ENCODE measurements at regions of chr6 and their contacts with region 1.

Region 1: DNA sequence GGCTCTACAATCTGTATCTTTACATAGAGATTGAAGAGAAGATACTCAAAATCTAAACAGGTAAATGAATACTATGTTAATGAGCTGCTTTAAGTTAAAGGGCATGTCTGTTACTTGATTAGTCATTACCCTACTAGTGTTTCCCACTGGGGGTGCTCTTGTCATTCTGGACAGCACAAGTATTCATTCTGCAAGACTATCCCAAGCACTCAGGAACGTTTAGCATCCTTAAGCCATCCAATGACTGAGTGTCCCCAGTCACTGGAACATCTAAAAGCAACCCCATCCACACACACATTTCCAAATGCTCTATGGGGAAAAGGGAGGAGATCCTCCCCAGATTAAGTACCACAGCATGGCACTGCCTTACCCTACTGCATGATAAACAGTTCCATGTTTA is 25.7 kb downstream of the EZR start:
- DNase-seq: no peak
- ATAC-seq: peak; percentile 74
- H3K4me3 ChIP-seq: 0 out of 2 replicates have a peak overlapping the region, but pooled peaks have one; percentile 36
- H3K27ac ChIP-seq: no peak overlapping the region
- H3K4me1 ChIP-seq: peaks cover 65% of the 10 kb centered on the region
- H3K27me3 ChIP-seq: no peaks in the 10 kb centered on the region
- CTCF ChIP-seq: peak; percentile 62 to 69 (median 68)
- EP300 ChIP-seq: no peak
- POLR2A ChIP-seq: no peak
- RAD21 ChIP-seq: peak; percentile 82

Region 2: GRCh38 chr6:158704181-158704822 is 89.1 kb before region 1 on chr6:
- CTCF ChIA-PET with region 1: interaction called, 6 read pairs
- POLR2A ChIA-PET with region 1: interaction called, 3 read pairs
- RAD21 ChIA-PET with region 1: interaction called, 11 read pairs
- SMC1A ChIA-PET with region 1: interaction called, 7 read pairs
- in situ Hi-C with region 1: loop called (anchors 5 kb)
- intact Hi-C with region 1: loop called (anchors 1 kb)
- DNase-seq: no peak
- ATAC-seq: peak; percentile 99
- H3K4me3 ChIP-seq: peak overlapping the region; percentile 45; the same call in 1 of the 2 replicates
- H3K27ac ChIP-seq: no peak overlapping the region
- H3K4me1 ChIP-seq: peaks cover 9% of the 10 kb centered on the region
- H3K27me3 ChIP-seq: no peaks in the 10 kb centered on the region
- CTCF ChIP-seq: peak; percentile 97 to 99 (median 98); a peak in 5 of 6 replicates
- EP300 ChIP-seq: no peak
- POLR2A ChIP-seq: no peak
- RAD21 ChIP-seq: peak; percentile 97

Region 3: DNA sequence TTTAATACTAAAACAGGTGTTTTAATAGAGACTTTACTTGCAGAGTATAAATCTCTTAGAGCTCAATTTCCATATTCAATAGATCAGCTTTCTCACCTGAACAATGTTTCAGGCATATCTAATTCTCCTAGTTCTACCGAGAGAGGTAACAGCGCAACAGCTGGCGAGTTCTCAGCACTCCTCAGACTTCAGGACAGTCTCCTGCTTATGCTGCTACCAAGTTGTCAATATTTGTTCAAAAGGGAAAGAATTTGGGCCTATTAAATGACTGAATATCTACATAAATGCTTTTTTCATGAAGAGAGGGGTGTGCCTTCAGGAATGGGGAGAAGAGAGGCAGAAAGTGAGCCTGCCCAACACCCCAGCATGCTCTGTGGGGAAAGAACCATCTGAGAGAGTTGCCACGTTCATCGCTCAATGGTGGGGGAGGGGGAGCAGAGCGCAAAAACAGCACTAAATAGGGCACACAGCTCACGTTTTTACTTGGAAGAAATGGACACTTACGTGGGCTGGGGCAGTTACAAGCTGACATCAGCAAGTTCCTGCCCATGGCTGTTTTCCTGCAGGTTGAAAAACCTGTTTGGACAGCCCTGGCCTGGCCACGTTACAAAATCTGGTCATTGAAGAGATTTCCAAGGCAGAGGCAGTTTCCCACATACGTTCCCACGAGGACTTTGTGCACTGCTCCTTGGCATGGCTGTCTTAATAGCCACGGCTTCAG is 12.3 kb before region 1 on chr6:
- CTCF ChIA-PET with region 1: interaction called, 3 read pairs
- POLR2A ChIA-PET with region 1: interaction called, 4 read pairs
- RAD21 ChIA-PET with region 1: interaction called, 3 read pairs
- SMC1A ChIA-PET with region 1: interaction called, 11 read pairs
- in situ Hi-C with region 1: no loop called
- intact Hi-C with region 1: no loop called
- DNase-seq: no peak
- ATAC-seq: no peak
- H3K4me3 ChIP-seq: no peak overlapping the region
- H3K27ac ChIP-seq: no peak overlapping the region
- H3K4me1 ChIP-seq: no peaks in the 10 kb centered on the region
- H3K27me3 ChIP-seq: no peaks in the 10 kb centered on the region
- CTCF ChIP-seq: no peak
- EP300 ChIP-seq: no peak
- POLR2A ChIP-seq: peak; percentile 25
- RAD21 ChIP-seq: no peak

Region 4: DNA sequence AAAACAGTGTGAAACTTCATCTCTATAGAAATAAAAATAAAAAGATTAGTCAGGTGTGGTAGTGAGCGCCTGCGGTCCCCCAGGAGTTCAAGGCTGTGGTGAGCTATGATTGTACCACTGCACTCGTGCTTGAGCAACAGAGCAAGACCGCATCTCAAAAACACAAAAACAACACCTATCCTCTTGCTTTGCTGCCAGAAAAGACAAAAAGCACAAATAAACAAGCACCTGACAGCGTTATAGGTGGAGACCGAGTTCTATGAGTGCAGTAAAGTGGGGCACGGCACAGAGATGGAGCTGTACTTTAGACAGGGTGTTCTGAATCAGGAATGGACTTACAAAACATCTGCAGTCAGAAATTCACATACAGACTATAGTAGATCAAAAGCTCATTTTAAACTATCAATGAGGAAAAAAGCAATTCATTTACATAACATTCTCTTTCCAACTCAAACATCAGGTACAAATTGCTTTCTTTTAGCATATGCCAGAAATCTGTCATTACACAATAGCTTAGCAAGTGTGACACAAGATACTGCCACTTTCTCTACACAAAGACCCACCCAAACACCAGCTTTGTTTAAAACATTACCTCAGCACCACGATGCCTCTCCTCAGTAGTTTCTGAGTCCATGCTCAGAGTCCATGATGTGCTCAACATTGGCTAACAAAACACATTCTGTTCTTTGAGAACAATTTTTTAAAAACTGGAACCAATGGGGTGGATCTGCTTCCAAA is 15.7 kb after region 1 on chr6:
- CTCF ChIA-PET with region 1: interaction called, 97 read pairs
- POLR2A ChIA-PET with region 1: interaction called, 27 read pairs
- RAD21 ChIA-PET with region 1: interaction called, 65 read pairs
- SMC1A ChIA-PET with region 1: interaction called, 73 read pairs
- in situ Hi-C with region 1: no loop called
- intact Hi-C with region 1: loop called (anchors 1 kb)
- DNase-seq: peak; percentile 80
- ATAC-seq: peak; percentile 69
- H3K4me3 ChIP-seq: peak overlapping the region; percentile 29; the same call in 1 of the 2 replicates
- H3K27ac ChIP-seq: peak overlapping the region; percentile 54
- H3K4me1 ChIP-seq: peaks cover 76% of the 10 kb centered on the region
- H3K27me3 ChIP-seq: no peaks in the 10 kb centered on the region
- CTCF ChIP-seq: no peak
- EP300 ChIP-seq: peak; percentile 75 to 91
- POLR2A ChIP-seq: no peak
- RAD21 ChIP-seq: no peak

Region 5: DNA sequence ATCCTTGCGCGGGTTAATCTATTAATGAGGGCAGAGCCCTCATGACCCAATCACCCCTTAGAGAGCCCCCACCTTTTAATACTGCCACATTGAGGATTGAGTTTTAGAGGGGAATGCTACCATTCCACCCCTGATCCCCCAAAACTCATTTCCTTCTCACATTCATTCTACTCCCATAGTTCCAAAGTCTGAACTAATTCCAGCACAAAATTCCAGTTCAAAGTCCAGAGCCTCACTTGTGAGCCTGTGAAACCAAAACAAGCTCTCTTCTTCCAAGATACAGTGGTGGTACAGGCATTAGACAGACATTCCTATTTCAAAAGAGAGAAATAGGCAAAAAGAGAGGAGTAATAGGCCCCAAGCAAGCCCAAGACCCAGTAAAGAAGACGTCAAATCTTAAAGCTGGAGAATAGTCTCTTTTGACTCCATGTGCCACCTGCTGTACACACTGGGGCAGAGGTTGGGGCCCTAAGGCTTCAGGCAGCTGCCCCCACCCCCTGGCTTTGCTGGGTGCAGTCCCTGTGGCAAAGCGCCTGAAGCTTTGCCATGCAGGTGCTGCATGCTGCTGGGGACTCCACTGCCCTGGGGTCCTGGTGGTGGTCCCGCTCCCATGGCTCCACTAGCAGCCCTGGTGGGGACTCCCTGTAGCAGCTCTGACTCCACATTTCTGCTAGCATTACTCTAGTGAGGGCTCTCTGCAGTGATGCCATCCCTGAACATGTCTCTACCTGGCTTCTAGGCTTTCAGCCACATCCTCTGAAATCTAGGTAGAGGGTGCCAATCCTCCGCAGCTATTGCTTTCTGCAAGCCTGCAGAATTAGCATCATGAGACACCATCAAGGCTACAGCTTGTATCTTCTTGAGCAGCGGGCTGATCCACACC is 165.3 kb after region 1 on chr6:
- CTCF ChIA-PET with region 1: interaction called, 22 read pairs
- POLR2A ChIA-PET with region 1: no interaction called
- RAD21 ChIA-PET with region 1: interaction called, 8 read pairs
- SMC1A ChIA-PET with region 1: interaction called, 14 read pairs
- in situ Hi-C with region 1: no loop called
- intact Hi-C with region 1: no loop called
- DNase-seq: no peak
- ATAC-seq: peak; percentile 86
- H3K4me3 ChIP-seq: no peak overlapping the region
- H3K27ac ChIP-seq: no peak overlapping the region
- H3K4me1 ChIP-seq: no peaks in the 10 kb centered on the region
- H3K27me3 ChIP-seq: no peaks in the 10 kb centered on the region
- CTCF ChIP-seq: peak; percentile 28 to 46 (median 36); a peak in 4 of 6 replicates
- EP300 ChIP-seq: no peak
- POLR2A ChIP-seq: no peak
- RAD21 ChIP-seq: peak; percentile 54